Naive thymus-derived CD4-positive, alpha-beta T cell (primary cell): ENCODE measurements at regions of chr16 and their contacts with region 1.

Region 1: GRCh38 chr16:53482123-53482522 is 20.9 kb downstream of the AKTIP start:
- DNase-seq: no peak
- ATAC-seq: peak; percentile 86
- H3K4me3 ChIP-seq: no peak overlapping the region
- H3K4me3 Mint-ChIP-seq: peak overlapping the region in 2 of 10 donors; percentile 32 to 33
- H3K27ac ChIP-seq: no peak overlapping the region
- H3K27ac Mint-ChIP-seq: peak overlapping the region in 8 of 9 donors; percentile 36 to 90 (median 78)
- H3K4me1 ChIP-seq: peaks cover 3 to 4% of the 10 kb centered on the region in 2 donors
- H3K4me1 Mint-ChIP-seq: peaks cover 15 to 64% (median 38%) of the 10 kb centered on the region in 7 donors
- H3K27me3 ChIP-seq: no peaks in the 10 kb centered on the region
- H3K27me3 Mint-ChIP-seq: no peaks in the 10 kb centered on the region

Region 2: GRCh38 chr16:53449632-53450517 is 32.2 kb before region 1 on chr16:
- CTCF ChIA-PET with region 1: no interaction called
- POLR2A ChIA-PET with region 1: interaction called, 11 read pairs
- intact Hi-C with region 1: no loop called
- DNase-seq: peak in 3 of 9 donors; percentile 13 to 16 (median 15)
- ATAC-seq: peak; percentile 46
- H3K4me3 ChIP-seq: peak overlapping the region; percentile 43
- H3K4me3 Mint-ChIP-seq: peak overlapping the region; percentile 12 to 93 (median 80)
- H3K27ac ChIP-seq: peak overlapping the region; percentile 64
- H3K27ac Mint-ChIP-seq: peak overlapping the region; percentile 50 to 95 (median 86)
- H3K4me1 ChIP-seq: peaks cover 48 to 49% of the 10 kb centered on the region in 2 donors
- H3K4me1 Mint-ChIP-seq: peaks cover 30 to 91% (median 78%) of the 10 kb centered on the region in 7 donors
- H3K27me3 ChIP-seq: no peaks in the 10 kb centered on the region
- H3K27me3 Mint-ChIP-seq: no peaks in the 10 kb centered on the region